SK-N-SH (cell line): ENCODE measurements at regions of chr13 and their contacts with region 1.

Region 1: GRCh38 chr13:60431108-60431700 is 34.2 kb downstream of the TDRD3 start:
- DNase-seq: peak; percentile 36
- H3K4me3 ChIP-seq: no peak overlapping the region; a peak in 1 of 4 replicates
- H3K27ac ChIP-seq: no peak overlapping the region
- H3K4me1 ChIP-seq: peaks cover 0 to 5% of the 10 kb centered on the region in 2 experiments; a peak in 2 of 4 replicates
- H3K27me3 ChIP-seq: no peaks in the 10 kb centered on the region
- CTCF ChIP-seq: peak; percentile 95
- EP300 ChIP-seq: no peak
- RAD21 ChIP-seq: peak; percentile 92

Region 2: DNA sequence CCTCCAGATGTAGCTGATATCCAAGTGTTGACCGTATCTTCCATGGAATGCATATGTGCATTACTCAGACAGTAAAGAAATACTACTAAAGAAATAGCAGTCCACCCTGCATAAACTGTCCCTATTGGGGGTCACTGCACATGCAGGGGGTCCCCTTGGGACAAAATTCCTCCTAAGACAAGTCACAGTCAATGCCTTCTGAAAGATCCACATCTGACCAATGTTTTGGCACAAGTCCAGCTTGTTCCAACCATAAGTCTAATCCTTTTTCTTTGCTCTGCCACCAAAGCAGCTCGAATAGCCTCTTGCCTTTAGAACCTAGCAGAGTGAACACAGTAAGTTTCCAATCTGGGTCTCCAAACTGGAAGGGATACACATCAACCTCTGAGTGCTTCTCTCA is 355.4 kb before region 1 on chr13:
- CTCF ChIA-PET with region 1: no interaction called
- POLR2A ChIA-PET with region 1: no interaction called
- DNase-seq: no peak
- H3K4me3 ChIP-seq: no peak overlapping the region
- H3K27ac ChIP-seq: no peak overlapping the region
- H3K4me1 ChIP-seq: peaks cover 2 to 18% of the 10 kb centered on the region in 2 experiments; a peak in 3 of 4 replicates
- H3K27me3 ChIP-seq: no peaks in the 10 kb centered on the region
- CTCF ChIP-seq: no peak
- EP300 ChIP-seq: no peak
- RAD21 ChIP-seq: no peak

Region 3: GRCh38 chr13:60396783-60397703 is 34.2 kb before region 1 on chr13 and contains the start of gene TDRD3:
- CTCF ChIA-PET with region 1: interaction called, 14 read pairs
- POLR2A ChIA-PET with region 1: interaction called, 4 read pairs
- DNase-seq: peak; percentile 90
- H3K4me3 ChIP-seq: peak within 1 kb of the TSS; percentile 78 to 89
- H3K27ac ChIP-seq: peak within 1 kb of the TSS; percentile 93 to 97
- H3K4me1 ChIP-seq: peaks cover 3 to 8% of the 10 kb centered on the region in 2 experiments; a peak in 2 of 4 replicates
- H3K27me3 ChIP-seq: no peaks in the 10 kb centered on the region
- CTCF ChIP-seq: peak; percentile 92
- EP300 ChIP-seq: no peak
- RAD21 ChIP-seq: peak; percentile 28; the same call in 1 of the 2 replicates
- polyA plus RNA-seq, gene TDRD3: 3.8 and 5.1 TPM in 2 replicates